GM12878 (cell line): ENCODE measurements at regions of chr20 and their contacts with region 1.

Region 1: GRCh38 chr20:50790651-50791277 is 4.1 kb upstream of the BCAS4 start:
- DNase-seq: peak; percentile 51
- ATAC-seq: peak; percentile 83
- H3K4me3 ChIP-seq: no peak overlapping the region; the same call in 1 of the 2 replicates
- H3K27ac ChIP-seq: peak overlapping the region; percentile 65
- H3K4me1 ChIP-seq: peaks cover 10% of the 10 kb centered on the region
- H3K27me3 ChIP-seq: no peaks in the 10 kb centered on the region
- CTCF ChIP-seq: peak; percentile 81 to 95 (median 90)
- EP300 ChIP-seq: no peak
- POLR2A ChIP-seq: peak; percentile 94
- RAD21 ChIP-seq: peak; percentile 51

Region 2: GRCh38 chr20:50815162-50815989 is 24.6 kb after region 1 on chr20:
- CTCF ChIA-PET with region 1: interaction called, 30 read pairs
- POLR2A ChIA-PET with region 1: interaction called, 8 read pairs
- RAD21 ChIA-PET with region 1: interaction called, 141 read pairs
- SMC1A ChIA-PET with region 1: interaction called, 119 read pairs
- in situ Hi-C with region 1: no loop called
- intact Hi-C with region 1: loop called (anchors 1 kb)
- DNase-seq: peak; percentile 65
- ATAC-seq: peak; percentile 57
- H3K4me3 ChIP-seq: peak overlapping the region; percentile 53
- H3K27ac ChIP-seq: peak overlapping the region; percentile 95
- H3K4me1 ChIP-seq: peaks cover 92% of the 10 kb centered on the region
- H3K27me3 ChIP-seq: no peaks in the 10 kb centered on the region
- CTCF ChIP-seq: no peak
- EP300 ChIP-seq: peak in 1 of 2 experiments; percentile 57; a peak in 2 of 4 replicates
- POLR2A ChIP-seq: no peak
- RAD21 ChIP-seq: no peak

Region 3: DNA sequence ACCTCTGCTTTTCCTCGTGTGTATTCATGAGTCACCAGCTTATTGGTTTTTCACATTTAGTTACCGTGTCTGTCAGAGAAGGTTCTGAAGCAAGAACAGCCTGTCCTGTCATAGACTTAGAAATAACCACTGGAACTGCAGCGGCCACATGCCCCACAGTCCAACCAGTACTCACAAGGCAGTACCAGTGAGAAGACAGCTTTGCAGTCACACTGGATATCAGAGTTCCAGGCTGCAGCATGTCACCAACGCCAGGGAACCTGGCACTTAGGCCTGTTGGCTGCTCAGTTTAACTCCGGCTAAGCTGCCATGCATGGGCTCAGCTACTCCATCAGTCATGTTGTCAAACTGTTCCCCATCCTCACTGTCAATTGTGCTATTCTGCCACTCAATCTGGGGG is 100.4 kb after region 1 on chr20:
- CTCF ChIA-PET with region 1: interaction called, 13 read pairs
- POLR2A ChIA-PET with region 1: interaction called, 5 read pairs
- RAD21 ChIA-PET with region 1: interaction called, 11 read pairs
- SMC1A ChIA-PET with region 1: interaction called, 4 read pairs
- in situ Hi-C with region 1: no loop called
- intact Hi-C with region 1: loop called (anchors 5 kb)
- DNase-seq: no peak
- ATAC-seq: no peak; the same call in 2 of the 3 replicates
- H3K4me3 ChIP-seq: no peak overlapping the region
- H3K27ac ChIP-seq: no peak overlapping the region
- H3K4me1 ChIP-seq: no peaks in the 10 kb centered on the region
- H3K27me3 ChIP-seq: no peaks in the 10 kb centered on the region
- CTCF ChIP-seq: no peak
- EP300 ChIP-seq: no peak
- POLR2A ChIP-seq: peak; percentile 77
- RAD21 ChIP-seq: no peak

Region 4: GRCh38 chr20:50913690-50914375 is 123.1 kb after region 1 on chr20:
- CTCF ChIA-PET with region 1: interaction called, 23 read pairs
- POLR2A ChIA-PET with region 1: interaction called, 8 read pairs
- RAD21 ChIA-PET with region 1: interaction called, 10 read pairs
- SMC1A ChIA-PET with region 1: interaction called, 8 read pairs
- in situ Hi-C with region 1: no loop called
- intact Hi-C with region 1: no loop called
- DNase-seq: no peak
- ATAC-seq: peak; percentile 56
- H3K4me3 ChIP-seq: no peak overlapping the region
- H3K27ac ChIP-seq: no peak overlapping the region
- H3K4me1 ChIP-seq: peaks cover 76% of the 10 kb centered on the region
- H3K27me3 ChIP-seq: no peaks in the 10 kb centered on the region
- CTCF ChIP-seq: no peak
- EP300 ChIP-seq: no peak
- POLR2A ChIP-seq: no peak
- RAD21 ChIP-seq: no peak

Region 5: GRCh38 chr20:50958615-50959542 is 168.1 kb after region 1 on chr20 and contains the start of gene MOCS3:
- CTCF ChIA-PET with region 1: interaction called, 34 read pairs
- POLR2A ChIA-PET with region 1: interaction called, 9 read pairs
- RAD21 ChIA-PET with region 1: interaction called, 29 read pairs
- SMC1A ChIA-PET with region 1: interaction called, 26 read pairs
- in situ Hi-C with region 1: no loop called
- intact Hi-C with region 1: no loop called
- DNase-seq: peak; percentile 86
- ATAC-seq: peak; percentile 88
- H3K4me3 ChIP-seq: peak within 1 kb of the TSS; percentile 88
- H3K27ac ChIP-seq: peak within 1 kb of the TSS; percentile 96
- H3K4me1 ChIP-seq: peaks cover 13% of the 10 kb centered on the region
- H3K27me3 ChIP-seq: no peaks in the 10 kb centered on the region
- CTCF ChIP-seq: no peak
- EP300 ChIP-seq: no peak
- POLR2A ChIP-seq: no peak; the same call in 1 of the 2 replicates
- RAD21 ChIP-seq: no peak
- polyA plus RNA-seq, gene MOCS3: 0.87 to 0.99 TPM

Region 6: GRCh38 chr20:51306503-51307358 is 516.0 kb after region 1 on chr20:
- CTCF ChIA-PET with region 1: interaction called, 35 read pairs
- POLR2A ChIA-PET with region 1: no interaction called
- RAD21 ChIA-PET with region 1: interaction called, 15 read pairs
- SMC1A ChIA-PET with region 1: interaction called, 4 read pairs
- in situ Hi-C with region 1: loop called (anchors 5 kb)
- intact Hi-C with region 1: loop called (anchors 5 kb)
- DNase-seq: no peak
- ATAC-seq: peak; percentile 100
- H3K4me3 ChIP-seq: no peak overlapping the region
- H3K27ac ChIP-seq: no peak overlapping the region
- H3K4me1 ChIP-seq: no peaks in the 10 kb centered on the region
- H3K27me3 ChIP-seq: peaks cover 1 to 2% of the 10 kb centered on the region in 2 experiments; a peak in 3 of 4 replicates
- CTCF ChIP-seq: peak; percentile 89 to 91 (median 89)
- EP300 ChIP-seq: no peak
- POLR2A ChIP-seq: no peak
- RAD21 ChIP-seq: peak; percentile 83